SK-N-SH (cell line): ENCODE measurements at regions of chrX and their contacts with region 1.

Region 1: DNA sequence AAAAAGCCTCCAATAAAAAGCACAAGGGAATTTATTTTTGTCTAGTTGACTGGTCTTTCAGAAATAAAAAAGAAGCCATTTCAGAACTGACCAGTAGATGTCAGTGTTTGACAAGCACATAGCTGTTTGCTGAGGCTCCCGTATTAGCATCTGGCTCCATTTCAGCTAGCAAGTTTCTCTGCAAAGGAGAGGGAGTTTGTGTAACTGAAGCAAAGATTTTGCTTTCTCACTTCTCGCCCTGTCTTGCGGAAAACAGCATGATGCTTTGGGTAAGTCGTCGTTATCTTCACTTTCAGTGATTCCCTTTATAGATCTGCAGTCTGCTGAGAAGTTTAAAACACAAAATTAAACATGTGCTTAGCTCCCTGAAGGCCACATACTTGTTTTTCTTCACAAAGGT is 85.5 kb downstream of the CT47B1 start:
- DNase-seq: peak; percentile 45
- H3K4me3 ChIP-seq: no peak overlapping the region
- H3K27ac ChIP-seq: peak overlapping the region in 1 of 2 experiments; percentile 13; a peak in 1 of 4 replicates
- H3K4me1 ChIP-seq: no peaks in the 10 kb centered on the region
- H3K27me3 ChIP-seq: no peaks in the 10 kb centered on the region
- CTCF ChIP-seq: peak; percentile 89
- EP300 ChIP-seq: no peak
- RAD21 ChIP-seq: peak; percentile 93

Region 2: DNA sequence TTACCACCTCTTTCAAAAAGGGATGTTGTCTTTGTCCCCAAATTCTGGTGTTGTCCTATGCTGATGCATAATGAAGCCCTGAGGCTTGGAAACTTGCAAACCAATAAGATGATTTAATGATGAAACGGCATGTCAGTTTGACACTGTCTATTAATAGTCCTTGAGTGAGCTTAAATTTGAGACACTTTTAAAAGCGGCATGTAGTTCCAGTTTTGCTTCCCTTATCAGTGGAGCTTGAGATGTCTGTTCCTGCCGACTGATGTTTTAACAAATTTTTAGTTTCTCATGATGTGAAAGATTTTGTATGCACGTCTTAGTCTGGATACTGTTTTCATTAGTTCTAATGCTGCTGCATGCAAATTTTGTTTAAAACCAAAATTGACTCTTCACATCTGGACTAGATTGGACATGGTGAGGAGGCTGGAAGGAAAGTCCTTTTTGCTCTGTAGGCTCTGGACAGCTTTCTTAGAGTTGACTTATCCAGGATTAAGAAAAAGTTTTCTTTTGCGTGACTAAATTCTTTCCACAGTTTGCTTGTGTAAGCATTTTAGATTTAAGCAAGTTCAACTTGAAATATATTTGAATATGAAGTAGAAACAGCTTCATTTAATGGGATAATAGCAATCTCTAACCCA is 172.0 kb before region 1 on chrX:
- CTCF ChIA-PET with region 1: no interaction called
- POLR2A ChIA-PET with region 1: no interaction called
- DNase-seq: no peak
- H3K4me3 ChIP-seq: no peak overlapping the region
- H3K27ac ChIP-seq: no peak overlapping the region
- H3K4me1 ChIP-seq: no peaks in the 10 kb centered on the region
- H3K27me3 ChIP-seq: no peaks in the 10 kb centered on the region
- CTCF ChIP-seq: no peak
- EP300 ChIP-seq: no peak
- RAD21 ChIP-seq: no peak

Region 3: GRCh38 chrX:120801426-120801825 is 11.3 kb after region 1 on chrX:
- CTCF ChIA-PET with region 1: interaction called, 28 read pairs
- POLR2A ChIA-PET with region 1: no interaction called
- DNase-seq: no peak
- H3K4me3 ChIP-seq: no peak overlapping the region
- H3K27ac ChIP-seq: no peak overlapping the region
- H3K4me1 ChIP-seq: peaks cover 0 to 4% of the 10 kb centered on the region in 2 experiments; a peak in 1 of 4 replicates
- H3K27me3 ChIP-seq: no peaks in the 10 kb centered on the region; the same call in 1 of the 2 replicates
- CTCF ChIP-seq: no peak
- EP300 ChIP-seq: no peak
- RAD21 ChIP-seq: no peak